ENCODE measurements at regions of chr18 and their contacts with region 1.

Region 1: DNA sequence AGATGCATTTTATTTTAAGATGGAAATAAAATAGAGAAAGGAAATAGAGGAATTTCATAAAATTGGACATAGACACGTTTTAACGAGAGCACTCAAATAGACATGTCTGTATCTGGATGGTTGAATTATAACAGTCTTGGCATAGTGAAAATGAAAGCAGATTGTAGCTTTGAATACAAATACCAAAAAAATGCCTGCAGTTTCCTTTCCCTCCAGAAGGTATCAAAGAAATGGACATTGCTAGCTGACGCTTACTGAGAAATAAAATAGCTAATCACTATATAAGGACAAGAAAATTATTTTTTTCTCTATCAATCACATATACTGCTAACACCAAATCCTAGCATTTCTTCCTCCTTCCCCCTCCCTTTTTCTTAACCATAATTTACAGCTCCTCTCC is 11.4 kb upstream of the MAPRE2 start:
- DNase-seq: no peak
- ATAC-seq: peak; percentile 67
- H3K4me3 Mint-ChIP-seq: peak overlapping the region; percentile 69
- H3K27ac Mint-ChIP-seq: peak overlapping the region; percentile 96
- H3K4me1 Mint-ChIP-seq: peaks cover 61% of the 10 kb centered on the region
- H3K27me3 Mint-ChIP-seq: no peaks in the 10 kb centered on the region

Region 2: DNA sequence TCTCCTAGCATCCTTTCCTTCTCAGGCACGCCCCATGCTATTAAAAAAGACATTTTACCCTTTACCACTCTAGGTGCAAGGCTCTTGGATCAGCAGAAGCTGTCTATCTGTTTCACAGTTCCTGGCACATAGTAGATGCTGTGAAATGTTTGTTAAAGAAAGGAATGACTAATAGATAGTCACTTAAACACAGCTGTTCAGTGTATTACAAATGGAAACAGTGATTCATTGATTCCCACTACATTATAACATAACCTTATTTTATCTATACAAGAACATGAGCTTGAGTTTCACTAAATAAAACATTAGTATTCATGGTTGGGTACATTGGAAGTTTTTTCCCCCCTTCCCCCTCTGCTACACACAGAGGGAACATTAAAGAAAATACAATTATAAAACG is 1309.6 kb before region 1 on chr18:
- CTCF ChIA-PET with region 1: no interaction called
- POLR2A ChIA-PET with region 1: no interaction called
- intact Hi-C with region 1: no loop called
- DNase-seq: no peak
- ATAC-seq: no peak
- H3K4me3 Mint-ChIP-seq: no peak overlapping the region
- H3K27ac Mint-ChIP-seq: no peak overlapping the region
- H3K4me1 Mint-ChIP-seq: no peaks in the 10 kb centered on the region
- H3K27me3 Mint-ChIP-seq: no peaks in the 10 kb centered on the region

Region 3: GRCh38 chr18:34976899-34977837 is 52.6 kb before region 1 on chr18:
- CTCF ChIA-PET with region 1: no interaction called
- POLR2A ChIA-PET with region 1: no interaction called
- intact Hi-C with region 1: loop called in 1 of 2 experiments (anchors 1 kb)
- DNase-seq: peak; percentile 85
- ATAC-seq: peak; percentile 55
- H3K4me3 Mint-ChIP-seq: peak overlapping the region; percentile 73
- H3K27ac Mint-ChIP-seq: no peak overlapping the region
- H3K4me1 Mint-ChIP-seq: peaks cover 23% of the 10 kb centered on the region
- H3K27me3 Mint-ChIP-seq: peaks cover 32% of the 10 kb centered on the region

Region 4: DNA sequence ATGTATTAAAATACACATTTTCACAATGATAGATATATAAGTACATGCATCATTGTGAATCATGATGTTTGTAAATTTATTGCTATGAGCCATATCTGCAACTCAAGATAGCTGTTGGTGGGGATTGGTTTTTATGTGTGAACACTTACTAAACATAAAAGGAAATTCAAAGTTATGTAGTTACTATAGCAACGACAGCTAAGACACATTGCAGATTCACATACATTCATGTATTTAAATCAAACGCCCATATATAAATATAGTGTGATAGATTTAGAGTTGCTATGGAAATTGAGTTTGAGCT is 77.0 kb after region 1 on chr18:
- CTCF ChIA-PET with region 1: interaction called, 3 read pairs
- POLR2A ChIA-PET with region 1: no interaction called
- intact Hi-C with region 1: loop called in 1 of 2 experiments (anchors 5 kb)
- DNase-seq: no peak
- ATAC-seq: peak; percentile 85
- H3K4me3 Mint-ChIP-seq: no peak overlapping the region
- H3K27ac Mint-ChIP-seq: peak overlapping the region; percentile 48
- H3K4me1 Mint-ChIP-seq: peaks cover 56% of the 10 kb centered on the region
- H3K27me3 Mint-ChIP-seq: no peaks in the 10 kb centered on the region

Region 5: GRCh38 chr18:35143622-35144596 is 114.1 kb after region 1 on chr18:
- CTCF ChIA-PET with region 1: interaction called, 19 read pairs
- POLR2A ChIA-PET with region 1: no interaction called
- intact Hi-C with region 1: loop called (anchors 1 kb)
- DNase-seq: peak; percentile 57
- ATAC-seq: peak; percentile 69
- H3K4me3 Mint-ChIP-seq: no peak overlapping the region
- H3K27ac Mint-ChIP-seq: no peak overlapping the region
- H3K4me1 Mint-ChIP-seq: peaks cover 8% of the 10 kb centered on the region
- H3K27me3 Mint-ChIP-seq: no peaks in the 10 kb centered on the region

Region 6: GRCh38 chr18:35290073-35290735 is 260.4 kb after region 1 on chr18 and contains the start of gene ZSCAN30:
- CTCF ChIA-PET with region 1: interaction called, 3 read pairs
- POLR2A ChIA-PET with region 1: no interaction called
- intact Hi-C with region 1: loop called in 1 of 2 experiments (anchors 5 kb)
- DNase-seq: peak; percentile 97
- ATAC-seq: peak; percentile 97
- H3K4me3 Mint-ChIP-seq: peak within 1 kb of the TSS; percentile 96
- H3K27ac Mint-ChIP-seq: peak within 1 kb of the TSS; percentile 96
- H3K4me1 Mint-ChIP-seq: peaks cover 45% of the 10 kb centered on the region
- H3K27me3 Mint-ChIP-seq: no peaks in the 10 kb centered on the region
- total RNA-seq, gene ZSCAN30: 24.2 to 25.4 TPM

Region 7: GRCh38 chr18:35616664-35617423 is 587.1 kb after region 1 on chr18:
- CTCF ChIA-PET with region 1: no interaction called
- POLR2A ChIA-PET with region 1: no interaction called
- intact Hi-C with region 1: loop called in 1 of 2 experiments (anchors 5 kb)
- DNase-seq: peak; percentile 81
- ATAC-seq: peak; percentile 94
- H3K4me3 Mint-ChIP-seq: no peak overlapping the region
- H3K27ac Mint-ChIP-seq: no peak overlapping the region
- H3K4me1 Mint-ChIP-seq: peaks cover 16% of the 10 kb centered on the region
- H3K27me3 Mint-ChIP-seq: no peaks in the 10 kb centered on the region

Measured in activated CD4-positive, alpha-beta T cell treated with anti-CD3 and anti-CD28 coated beads for 36 hours (primary cell).